Transverse colon (tissue), 4 donors: ENCODE measurements at regions of chr5 and their contacts with region 1.

Region 1: GRCh38 chr5:81125959-81126358 is 107.2 kb upstream of the CKMT2 start:
- DNase-seq: no peak
- H3K4me3 ChIP-seq: no peak overlapping the region
- H3K27ac ChIP-seq: peak overlapping the region in 1 of 4 donors; percentile 17
- H3K4me1 ChIP-seq: no peaks in the 10 kb centered on the region
- H3K27me3 ChIP-seq: no peaks in the 10 kb centered on the region
- CTCF ChIP-seq: no peak
- EP300 ChIP-seq: no peak
- POLR2A ChIP-seq: no peak

Region 2: GRCh38 chr5:79349881-79350280 is 1776.1 kb before region 1 on chr5:
- in situ Hi-C with region 1: no loop called
- intact Hi-C with region 1: loop called (anchors 5 kb)
- DNase-seq: no peak
- H3K4me3 ChIP-seq: no peak overlapping the region
- H3K27ac ChIP-seq: no peak overlapping the region
- H3K4me1 ChIP-seq: no peaks in the 10 kb centered on the region
- H3K27me3 ChIP-seq: no peaks in the 10 kb centered on the region
- CTCF ChIP-seq: no peak
- EP300 ChIP-seq: no peak
- POLR2A ChIP-seq: no peak

Region 3: DNA sequence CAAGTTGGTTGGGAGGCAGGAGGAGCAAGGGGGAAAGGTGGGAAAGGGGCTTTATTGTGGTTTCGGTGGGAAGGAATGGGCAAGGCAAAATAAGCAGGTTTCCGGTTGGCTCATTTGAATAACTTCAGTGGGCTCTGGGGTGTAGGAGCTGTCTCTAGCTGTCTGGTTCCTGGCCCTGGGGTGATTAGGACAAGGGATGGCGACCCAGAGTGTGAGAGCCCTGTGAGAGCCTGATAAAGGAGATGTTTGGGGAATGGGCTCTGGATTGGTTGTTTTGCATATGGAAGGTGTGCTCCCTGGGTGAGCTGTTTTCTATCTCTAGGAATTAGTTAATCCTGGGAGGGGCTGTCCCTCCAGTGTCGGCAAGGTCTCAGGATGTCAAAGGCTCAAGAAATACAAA is 571.3 kb before region 1 on chr5:
- in situ Hi-C with region 1: no loop called
- intact Hi-C with region 1: no loop called
- DNase-seq: no peak
- H3K4me3 ChIP-seq: no peak overlapping the region
- H3K27ac ChIP-seq: no peak overlapping the region
- H3K4me1 ChIP-seq: no peaks in the 10 kb centered on the region
- H3K27me3 ChIP-seq: peaks cover 36% of the 10 kb centered on the region
- CTCF ChIP-seq: no peak
- EP300 ChIP-seq: no peak
- POLR2A ChIP-seq: no peak